ENCODE measurements at regions of chrX and their contacts with region 1.

Region 1: GRCh38 chrX:102899940-102900916 is 36.8 kb upstream of the RAB40AL start:
- DNase-seq: peak; percentile 76
- ATAC-seq: peak; percentile 84
- H3K4me3 Mint-ChIP-seq: no peak overlapping the region
- H3K27ac Mint-ChIP-seq: no peak overlapping the region
- H3K4me1 Mint-ChIP-seq: peaks cover 4% of the 10 kb centered on the region; the same call in 1 of the 2 replicates
- H3K27me3 Mint-ChIP-seq: no peaks in the 10 kb centered on the region
- CTCF ChIP-seq: peak; percentile 54

Region 2: DNA sequence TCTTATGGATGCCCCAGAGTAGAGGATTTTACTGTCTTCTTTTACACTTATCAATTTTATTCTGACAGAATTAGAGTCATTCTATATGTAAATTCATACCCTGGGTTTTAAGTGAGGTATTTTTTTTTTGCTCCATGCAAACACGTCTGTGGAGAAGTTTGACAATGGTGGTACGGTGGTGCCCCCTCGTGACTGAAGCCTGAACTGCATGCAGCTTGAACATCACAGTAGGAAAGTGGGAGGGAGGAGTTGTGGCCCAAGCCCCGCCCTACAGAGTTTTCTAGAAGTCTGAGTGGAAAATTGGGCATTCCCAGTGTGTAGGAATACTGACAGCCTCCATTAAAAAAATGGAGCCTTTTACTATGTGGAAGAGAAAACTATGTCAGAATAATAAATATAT is 36.5 kb before region 1 on chrX:
- CTCF ChIA-PET with region 1: interaction called, 13 read pairs
- POLR2A ChIA-PET with region 1: no interaction called
- DNase-seq: peak; percentile 82
- ATAC-seq: peak; percentile 68
- H3K4me3 Mint-ChIP-seq: no peak overlapping the region
- H3K27ac Mint-ChIP-seq: no peak overlapping the region
- H3K4me1 Mint-ChIP-seq: peaks cover 4% of the 10 kb centered on the region
- H3K27me3 Mint-ChIP-seq: no peaks in the 10 kb centered on the region
- CTCF ChIP-seq: peak; percentile 67

Region 3: DNA sequence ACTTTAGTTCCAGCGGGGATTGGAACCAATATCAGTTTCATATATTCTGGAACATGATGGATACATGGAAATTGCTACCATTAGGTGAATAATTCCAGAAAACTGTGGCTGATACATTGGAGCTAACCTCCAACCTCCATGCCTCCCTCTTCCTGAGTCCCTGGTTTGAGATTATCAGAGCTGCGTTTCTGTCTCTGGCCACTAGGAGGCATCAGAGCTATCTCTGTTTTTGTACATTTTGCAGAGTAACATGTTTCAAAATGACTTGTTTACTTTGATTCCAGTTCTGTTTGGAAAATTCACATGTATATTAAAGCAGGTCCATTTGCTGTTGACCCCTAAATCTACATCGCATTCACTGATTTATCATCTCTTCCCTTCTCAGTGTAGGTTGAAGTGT is 34.4 kb after region 1 on chrX:
- CTCF ChIA-PET with region 1: interaction called, 16 read pairs
- POLR2A ChIA-PET with region 1: no interaction called
- DNase-seq: peak; percentile 36
- ATAC-seq: no peak
- H3K4me3 Mint-ChIP-seq: no peak overlapping the region
- H3K27ac Mint-ChIP-seq: no peak overlapping the region
- H3K4me1 Mint-ChIP-seq: peaks cover 5% of the 10 kb centered on the region; the same call in 1 of the 2 replicates
- H3K27me3 Mint-ChIP-seq: no peaks in the 10 kb centered on the region; the same call in 1 of the 2 replicates
- CTCF ChIP-seq: peak; percentile 48; the same call in 1 of the 2 replicates

Region 4: GRCh38 chrX:102950908-102951866 is 51.0 kb after region 1 on chrX:
- CTCF ChIA-PET with region 1: interaction called, 23 read pairs
- POLR2A ChIA-PET with region 1: no interaction called
- DNase-seq: peak; percentile 74
- ATAC-seq: peak; percentile 86
- H3K4me3 Mint-ChIP-seq: peak overlapping the region; percentile 72
- H3K27ac Mint-ChIP-seq: no peak overlapping the region
- H3K4me1 Mint-ChIP-seq: peaks cover 4% of the 10 kb centered on the region
- H3K27me3 Mint-ChIP-seq: no peaks in the 10 kb centered on the region; the same call in 1 of the 2 replicates
- CTCF ChIP-seq: peak; percentile 38; the same call in 1 of the 2 replicates

Region 5: DNA sequence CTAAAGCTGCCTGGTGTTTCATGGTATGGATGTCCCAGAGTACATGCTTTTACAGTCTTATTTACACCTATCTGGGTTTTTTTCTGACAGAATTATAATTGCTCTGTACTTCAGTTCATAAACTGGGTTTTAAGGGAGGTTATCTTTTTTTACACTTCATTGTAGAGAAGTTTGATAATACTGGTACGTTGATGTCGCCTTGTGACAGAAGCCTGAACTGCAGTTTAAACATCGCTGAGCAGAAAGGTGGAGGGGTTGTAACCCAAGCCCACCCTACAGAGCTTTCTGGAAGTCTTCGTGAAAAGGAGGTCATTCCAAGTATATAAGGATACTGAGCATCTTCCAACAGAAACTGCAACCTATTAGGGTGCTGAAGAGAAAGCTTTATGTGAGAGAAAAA is 117.3 kb after region 1 on chrX:
- CTCF ChIA-PET with region 1: no interaction called
- POLR2A ChIA-PET with region 1: no interaction called
- DNase-seq: no peak
- ATAC-seq: peak; percentile 41; the same call in 1 of the 2 replicates
- H3K4me3 Mint-ChIP-seq: no peak overlapping the region
- H3K27ac Mint-ChIP-seq: no peak overlapping the region
- H3K4me1 Mint-ChIP-seq: no peaks in the 10 kb centered on the region
- H3K27me3 Mint-ChIP-seq: peaks cover 30% of the 10 kb centered on the region
- CTCF ChIP-seq: no peak